ENCODE measurements at regions of chr10 and their contacts with region 1.

Region 1: GRCh38 chr10:5434017-5434753 is 21.8 kb downstream of the NET1 start:
- DNase-seq: no peak
- ATAC-seq: peak; percentile 81
- H3K4me3 Mint-ChIP-seq: no peak overlapping the region
- H3K27ac Mint-ChIP-seq: peak overlapping the region; percentile 69; the same call in 1 of the 2 replicates
- H3K4me1 Mint-ChIP-seq: peaks cover 10% of the 10 kb centered on the region
- H3K27me3 Mint-ChIP-seq: no peaks in the 10 kb centered on the region
- CTCF ChIP-seq: peak; percentile 28; the same call in 1 of the 2 replicates

Region 2: DNA sequence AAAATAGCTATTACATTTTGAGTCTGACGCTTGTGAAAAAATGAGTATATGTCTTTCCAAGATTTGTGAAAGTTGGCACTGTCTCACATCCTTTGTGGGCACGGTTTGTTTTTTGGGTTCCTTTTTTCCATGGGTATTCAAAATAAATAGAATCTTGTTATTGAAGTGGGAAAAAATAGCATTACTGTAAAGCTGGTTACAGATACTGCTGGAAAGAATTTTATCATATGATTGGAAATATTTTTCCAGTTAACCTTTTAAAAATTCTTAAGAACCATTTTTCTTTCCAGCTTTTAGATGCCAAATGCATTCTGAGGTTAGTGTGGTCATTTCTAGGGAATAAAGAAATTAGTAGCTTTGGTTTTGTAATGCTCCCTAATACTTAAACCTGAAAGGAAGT is 10.4 kb before region 1 on chr10:
- CTCF ChIA-PET with region 1: interaction called, 19 read pairs
- POLR2A ChIA-PET with region 1: no interaction called
- DNase-seq: no peak
- ATAC-seq: no peak
- H3K4me3 Mint-ChIP-seq: no peak overlapping the region
- H3K27ac Mint-ChIP-seq: no peak overlapping the region
- H3K4me1 Mint-ChIP-seq: peaks cover 47% of the 10 kb centered on the region
- H3K27me3 Mint-ChIP-seq: no peaks in the 10 kb centered on the region
- CTCF ChIP-seq: no peak

Region 3: GRCh38 chr10:5446390-5446926 is 12.3 kb after region 1 on chr10:
- CTCF ChIA-PET with region 1: interaction called, 10 read pairs
- POLR2A ChIA-PET with region 1: no interaction called
- DNase-seq: peak; percentile 95
- ATAC-seq: peak; percentile 98
- H3K4me3 Mint-ChIP-seq: peak overlapping the region; percentile 82
- H3K27ac Mint-ChIP-seq: peak overlapping the region; percentile 93
- H3K4me1 Mint-ChIP-seq: peaks cover 34% of the 10 kb centered on the region
- H3K27me3 Mint-ChIP-seq: no peaks in the 10 kb centered on the region
- CTCF ChIP-seq: no peak